ENCODE measurements at regions of chr5 and their contacts with region 1.

Region 1: GRCh38 chr5:142713121-142713706 is 27.3 kb upstream of the FGF1 start:
- DNase-seq: peak; percentile 87
- H3K4me3 Mint-ChIP-seq: peak overlapping the region; percentile 71
- H3K27ac Mint-ChIP-seq: peak overlapping the region; percentile 3
- H3K4me1 Mint-ChIP-seq: peaks cover 3% of the 10 kb centered on the region
- H3K27me3 Mint-ChIP-seq: peaks cover 3% of the 10 kb centered on the region

Region 2: DNA sequence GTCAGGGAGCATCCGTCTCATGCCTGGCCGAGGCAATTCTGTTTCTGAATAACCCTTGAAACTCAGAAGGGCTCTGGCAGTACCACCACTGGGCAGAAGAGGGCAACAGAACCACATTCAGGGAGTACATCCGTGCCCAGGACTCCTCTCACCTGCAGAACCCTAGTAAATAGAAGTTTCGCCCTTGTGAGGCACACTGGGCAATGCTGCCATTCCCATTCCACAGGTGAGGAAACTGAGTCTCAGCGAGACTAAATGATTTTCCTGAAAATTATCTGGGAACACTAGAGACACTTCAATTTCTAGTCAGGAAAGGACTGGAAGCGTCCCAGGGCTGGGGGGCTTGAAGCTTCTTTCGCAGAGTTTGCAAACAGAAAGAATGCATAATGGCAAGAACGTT is 102.1 kb before region 1 on chr5:
- CTCF ChIA-PET with region 1: interaction called, 10 read pairs
- intact Hi-C with region 1: loop called (anchors 1 kb)
- DNase-seq: peak; percentile 88
- H3K4me3 Mint-ChIP-seq: no peak overlapping the region
- H3K27ac Mint-ChIP-seq: no peak overlapping the region
- H3K4me1 Mint-ChIP-seq: no peaks in the 10 kb centered on the region
- H3K27me3 Mint-ChIP-seq: peaks cover 5% of the 10 kb centered on the region

Region 3: GRCh38 chr5:142748568-142749249 is 35.5 kb after region 1 on chr5:
- CTCF ChIA-PET with region 1: interaction called, 84 read pairs
- intact Hi-C with region 1: loop called (anchors 1 kb)
- DNase-seq: peak; percentile 76
- H3K4me3 Mint-ChIP-seq: no peak overlapping the region
- H3K27ac Mint-ChIP-seq: no peak overlapping the region
- H3K4me1 Mint-ChIP-seq: peaks cover 13% of the 10 kb centered on the region
- H3K27me3 Mint-ChIP-seq: no peaks in the 10 kb centered on the region

Region 4: DNA sequence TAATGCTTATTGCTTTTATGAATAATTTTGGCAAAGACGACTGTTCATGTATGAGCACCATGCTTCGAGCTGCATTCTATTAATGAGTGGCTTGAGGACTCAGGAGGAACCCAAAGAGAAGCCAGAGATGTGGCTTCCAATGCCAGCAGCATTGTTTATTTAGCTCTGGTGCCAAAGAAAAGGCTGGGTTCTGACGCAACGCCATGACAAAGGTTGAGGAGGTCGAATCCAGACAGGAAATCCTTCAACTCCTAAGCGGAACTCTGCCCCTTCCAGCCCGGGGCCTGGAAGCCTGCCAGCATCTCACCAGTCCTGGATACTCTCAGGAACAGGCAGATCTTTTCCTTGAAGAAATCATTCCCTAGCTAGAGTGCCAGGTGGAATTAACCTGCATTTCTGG is 161.3 kb after region 1 on chr5:
- CTCF ChIA-PET with region 1: interaction called, 184 read pairs
- intact Hi-C with region 1: no loop called
- DNase-seq: no peak
- H3K4me3 Mint-ChIP-seq: no peak overlapping the region
- H3K27ac Mint-ChIP-seq: no peak overlapping the region
- H3K4me1 Mint-ChIP-seq: peaks cover 3% of the 10 kb centered on the region
- H3K27me3 Mint-ChIP-seq: no peaks in the 10 kb centered on the region

Region 5: DNA sequence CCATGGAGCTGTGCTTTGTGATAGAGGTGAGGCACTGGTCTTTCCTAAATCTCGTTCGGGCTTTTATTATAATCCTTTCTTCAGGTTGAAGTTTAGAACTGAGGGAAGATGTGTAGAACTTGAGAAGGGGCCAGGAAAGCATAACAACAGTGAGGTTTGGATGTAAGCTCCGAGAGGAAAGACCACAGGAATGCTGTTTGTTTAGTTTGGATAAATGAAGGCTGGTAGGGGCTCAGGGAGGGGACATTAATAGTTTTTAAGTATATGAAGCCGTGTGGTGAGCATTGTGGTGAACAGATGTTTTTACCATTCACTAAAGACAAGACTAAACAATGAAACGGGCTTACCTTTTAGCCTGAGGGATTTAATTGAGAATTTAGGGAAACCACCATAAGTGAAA is 187.7 kb after region 1 on chr5:
- CTCF ChIA-PET with region 1: interaction called, 17 read pairs
- intact Hi-C with region 1: no loop called
- DNase-seq: no peak
- H3K4me3 Mint-ChIP-seq: no peak overlapping the region
- H3K27ac Mint-ChIP-seq: no peak overlapping the region
- H3K4me1 Mint-ChIP-seq: no peaks in the 10 kb centered on the region
- H3K27me3 Mint-ChIP-seq: no peaks in the 10 kb centered on the region